ENCODE measurements at regions of chr14 and their contacts with region 1.

Region 1: DNA sequence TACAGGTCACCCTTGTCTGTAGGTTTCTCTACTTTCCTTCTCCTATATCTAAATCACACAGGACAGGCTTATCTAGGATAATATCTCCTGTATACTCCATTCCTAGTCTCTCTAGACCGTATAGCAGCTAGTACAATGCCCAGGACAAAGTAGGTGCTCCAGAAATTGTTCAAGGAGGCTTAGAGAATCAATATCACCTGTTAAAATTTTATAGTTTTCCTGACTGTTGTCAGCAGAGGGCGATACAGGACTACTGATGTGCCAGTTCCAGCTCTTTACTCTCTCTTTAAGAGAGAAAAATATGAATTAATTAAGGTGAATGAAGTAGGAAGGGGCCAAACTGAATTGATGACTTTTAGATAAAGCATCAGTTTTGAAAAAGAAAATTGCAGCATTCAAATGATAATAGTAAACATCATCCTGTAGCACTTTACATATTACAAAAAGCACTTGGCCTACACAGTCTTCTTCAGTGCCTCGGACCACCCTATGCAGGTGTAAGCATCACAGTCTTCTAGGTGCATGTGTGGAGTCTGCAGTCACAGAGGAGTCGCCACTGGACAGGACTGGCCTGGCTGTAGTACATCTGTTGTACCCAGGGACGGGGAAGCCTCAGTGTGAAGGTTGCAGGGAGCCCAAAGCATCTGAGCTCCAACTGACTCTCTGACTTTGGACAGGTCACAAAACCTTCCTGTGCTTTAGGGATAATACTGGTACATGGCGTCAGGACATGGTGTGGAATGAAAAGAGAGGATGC is 61.9 kb upstream of the MAX start:
- DNase-seq: peak; percentile 58 to 70
- H3K4me3 ChIP-seq: no peak overlapping the region
- H3K4me1 ChIP-seq: no peaks in the 10 kb centered on the region
- H3K27me3 ChIP-seq: no peaks in the 10 kb centered on the region

Region 2: DNA sequence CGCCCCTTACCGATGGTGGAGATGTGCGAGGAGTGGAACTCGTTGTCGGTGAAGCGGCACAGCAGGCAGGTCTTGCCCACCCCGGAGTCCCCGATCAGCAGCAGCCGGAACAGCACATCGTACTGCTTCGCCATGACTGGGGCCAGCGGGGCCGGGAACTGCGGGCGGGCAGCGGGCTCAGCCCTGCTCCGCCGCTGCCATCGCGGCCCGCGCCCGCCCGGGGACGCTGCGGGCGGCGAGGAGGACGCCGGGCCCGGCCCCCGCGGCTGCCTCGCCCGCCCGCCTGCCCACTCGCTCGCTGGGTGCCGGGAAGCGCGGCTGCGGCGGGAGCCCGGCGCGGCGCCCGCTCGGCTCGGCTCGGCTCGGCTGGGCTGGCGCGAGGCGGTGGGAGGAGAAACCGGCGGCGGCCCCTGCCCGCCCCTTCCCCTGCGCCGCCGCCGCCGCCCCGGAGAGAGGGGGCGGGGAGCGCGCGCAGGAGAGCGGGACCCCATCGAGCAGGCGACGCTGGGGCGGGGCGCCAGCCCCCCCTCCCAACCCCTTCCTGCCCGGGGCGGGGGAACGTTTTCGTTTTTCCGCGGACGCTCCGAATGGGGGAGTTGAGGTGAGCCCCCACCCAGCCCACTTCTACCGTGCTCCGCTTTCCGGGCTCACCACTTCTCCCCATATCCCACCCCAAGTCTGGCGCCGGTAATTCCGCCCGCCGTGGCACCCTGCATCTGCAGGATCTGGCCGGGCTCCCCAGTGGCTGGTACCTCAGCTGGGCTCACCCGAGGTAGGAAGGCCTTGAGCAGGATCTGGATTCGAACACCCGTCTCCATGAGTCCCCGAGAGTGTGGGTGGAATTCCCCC is 192.1 kb before region 1 on chr14 and contains the start of gene RAB15:
- in situ Hi-C with region 1: no loop called
- DNase-seq: peak in 1 of 2 experiments; percentile 61
- H3K4me3 ChIP-seq: peak within 1 kb of the TSS; percentile 53
- H3K4me1 ChIP-seq: peaks cover 12% of the 10 kb centered on the region
- H3K27me3 ChIP-seq: no peaks in the 10 kb centered on the region

Region 3: DNA sequence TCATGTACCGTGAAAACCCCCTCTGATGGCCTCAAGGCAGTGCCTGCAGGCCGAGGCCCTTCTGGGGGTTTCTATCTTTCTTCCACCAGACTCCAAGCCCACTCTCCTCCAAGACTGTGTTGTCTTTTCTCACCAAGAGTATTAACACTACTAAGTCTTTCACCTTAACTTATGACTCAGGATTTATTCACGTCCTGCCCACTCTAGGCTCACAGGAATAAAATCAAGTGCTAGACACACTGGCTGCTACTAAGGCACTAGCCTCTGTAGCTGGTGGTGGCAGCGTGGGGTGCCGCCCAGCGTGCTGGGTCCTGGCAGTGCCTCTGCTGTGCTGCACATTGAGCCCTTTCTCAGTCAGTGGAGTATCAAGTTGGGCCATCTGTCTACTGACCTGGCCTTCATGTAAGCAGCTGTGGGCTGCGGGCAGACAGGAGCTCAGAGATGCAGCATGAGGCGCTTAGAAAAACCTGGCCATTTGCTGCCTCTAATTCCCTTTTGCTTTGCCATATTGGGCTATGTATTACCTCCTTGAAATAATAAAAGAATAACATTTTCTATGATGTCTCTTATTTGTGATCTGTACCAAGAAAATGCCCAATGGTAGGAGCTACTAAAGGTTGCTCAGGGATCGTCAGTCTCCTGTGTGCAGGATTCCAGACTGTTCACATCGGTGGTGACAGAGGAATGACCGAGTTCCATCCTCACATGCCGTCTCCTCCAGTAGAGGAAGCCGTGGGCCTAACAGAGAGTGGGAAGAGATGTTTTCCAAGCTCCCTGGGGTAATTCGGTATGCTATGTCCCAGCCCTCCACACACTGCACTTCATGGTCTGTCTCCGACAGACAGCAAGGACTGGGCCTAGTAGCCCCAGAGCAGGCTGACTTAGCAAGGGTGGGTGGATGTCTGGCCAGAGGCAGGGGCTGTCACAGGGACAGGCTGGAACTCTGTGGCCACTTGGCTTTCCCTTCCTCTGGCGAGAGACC is 101.9 kb before region 1 on chr14:
- in situ Hi-C with region 1: no loop called
- DNase-seq: no peak
- H3K4me3 ChIP-seq: no peak overlapping the region
- H3K4me1 ChIP-seq: no peaks in the 10 kb centered on the region
- H3K27me3 ChIP-seq: no peaks in the 10 kb centered on the region

Region 4: DNA sequence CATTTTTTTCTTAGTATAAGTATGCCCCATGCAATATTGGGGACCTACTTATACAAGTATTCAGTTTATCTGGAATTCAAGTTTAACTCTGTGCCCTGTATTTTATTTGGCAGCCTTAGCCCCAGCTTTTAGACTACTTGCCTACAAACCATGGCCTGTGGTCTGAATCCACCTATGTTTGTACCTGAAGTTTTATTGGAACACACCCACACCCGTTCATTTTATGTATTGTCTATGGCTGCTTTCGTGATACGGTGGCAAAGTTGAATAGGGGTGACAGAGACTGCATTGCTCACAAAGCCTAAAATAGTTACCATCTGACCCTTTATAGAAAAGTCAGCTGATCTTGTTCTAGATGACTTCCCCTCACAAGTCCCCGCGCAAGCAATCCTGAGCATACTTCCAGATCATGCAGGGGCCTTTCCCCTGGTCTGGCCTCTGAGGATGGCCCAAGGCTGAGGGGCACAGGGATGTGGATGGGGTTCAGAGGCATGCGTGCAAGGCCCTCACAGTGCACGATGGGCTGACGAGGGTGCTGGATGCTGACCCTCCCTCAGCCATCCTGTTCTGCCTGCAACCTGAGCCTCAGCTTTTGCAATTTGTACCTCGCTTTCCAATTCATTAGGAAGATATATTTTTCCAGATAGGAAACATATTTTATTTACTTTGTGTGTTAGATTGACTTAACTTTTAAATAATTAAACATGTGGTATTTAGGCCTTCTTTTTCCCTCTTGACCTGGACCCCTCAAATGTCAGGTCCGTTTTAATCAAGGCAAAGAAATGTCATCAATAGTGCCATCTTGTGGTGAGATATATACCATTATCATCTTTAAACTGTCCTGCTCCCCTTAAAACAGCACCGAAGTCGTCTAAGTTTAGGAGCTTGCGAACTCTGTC is 794.7 kb after region 1 on chr14:
- in situ Hi-C with region 1: loop called (anchors 25 kb)
- DNase-seq: peak in 1 of 2 experiments; percentile 35
- H3K4me3 ChIP-seq: no peak overlapping the region
- H3K4me1 ChIP-seq: no peaks in the 10 kb centered on the region
- H3K27me3 ChIP-seq: 0 out of 2 replicates have a peak, but pooled peaks cover 6% of the 10 kb centered on the region

Region 5: DNA sequence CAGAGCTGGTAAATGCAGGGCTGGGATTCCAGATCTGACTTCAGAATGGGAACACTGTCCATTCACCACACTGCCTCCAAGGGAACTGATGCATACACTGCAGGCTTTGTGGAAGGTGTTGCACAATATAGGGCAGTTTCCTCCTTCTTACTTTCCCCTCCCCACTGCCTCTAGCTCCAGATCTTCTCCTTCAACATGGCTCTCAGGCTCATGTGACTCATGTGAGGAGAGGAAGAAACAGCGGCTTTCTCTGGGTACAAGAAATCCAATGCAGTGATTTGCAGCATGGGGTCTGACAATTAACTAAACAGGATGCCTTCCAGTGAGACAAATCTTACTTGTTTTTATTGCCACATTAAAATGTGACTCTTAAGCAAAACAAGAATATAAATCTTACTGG is 874.4 kb after region 1 on chr14:
- in situ Hi-C with region 1: no loop called
- DNase-seq: no peak
- H3K4me3 ChIP-seq: no peak overlapping the region
- H3K4me1 ChIP-seq: no peaks in the 10 kb centered on the region
- H3K27me3 ChIP-seq: peaks cover 2% of the 10 kb centered on the region; the same call in 1 of the 2 replicates

Region 6: GRCh38 chr14:66070509-66071319 is 906.5 kb after region 1 on chr14:
- in situ Hi-C with region 1: loop called (anchors 10 kb)
- DNase-seq: peak; percentile 49 to 85
- H3K4me3 ChIP-seq: no peak overlapping the region
- H3K4me1 ChIP-seq: peaks cover 5% of the 10 kb centered on the region; the same call in 1 of the 2 replicates
- H3K27me3 ChIP-seq: peaks cover 4% of the 10 kb centered on the region; the same call in 1 of the 2 replicates